IMR-90 (cell line): ENCODE measurements at regions of chr6 and their contacts with region 1.

Region 1: GRCh38 chr6:12011276-12012076 is 636 bp upstream of the HIVEP1 start:
- DNase-seq: peak; percentile 96
- ATAC-seq: peak; percentile 72
- H3K4me3 ChIP-seq: peak overlapping the region; percentile 76
- H3K27ac ChIP-seq: peak overlapping the region; percentile 63; the same call in 1 of the 2 replicates
- H3K4me1 ChIP-seq: no peaks in the 10 kb centered on the region; the same call in 1 of the 2 replicates
- H3K27me3 ChIP-seq: no peaks in the 10 kb centered on the region
- CTCF ChIP-seq: no peak
- POLR2A ChIP-seq: peak; percentile 66
- RAD21 ChIP-seq: no peak

Region 2: GRCh38 chr6:11552442-11552841 is 459.0 kb before region 1 on chr6:
- CTCF ChIA-PET with region 1: no interaction called
- POLR2A ChIA-PET with region 1: no interaction called
- dilution Hi-C with region 1: no loop called
- in situ Hi-C with region 1: no loop called
- intact Hi-C with region 1: no loop called
- DNase-seq: no peak
- ATAC-seq: no peak
- H3K4me3 ChIP-seq: no peak overlapping the region
- H3K27ac ChIP-seq: no peak overlapping the region
- H3K4me1 ChIP-seq: no peaks in the 10 kb centered on the region
- H3K27me3 ChIP-seq: peaks cover 9% of the 10 kb centered on the region
- CTCF ChIP-seq: no peak
- POLR2A ChIP-seq: no peak
- RAD21 ChIP-seq: no peak

Region 3: GRCh38 chr6:11618533-11618932 is 392.9 kb before region 1 on chr6:
- CTCF ChIA-PET with region 1: interaction called, 3 read pairs
- POLR2A ChIA-PET with region 1: no interaction called
- dilution Hi-C with region 1: no loop called
- in situ Hi-C with region 1: no loop called
- intact Hi-C with region 1: loop called (anchors 5 kb)
- DNase-seq: peak; percentile 49
- ATAC-seq: no peak
- H3K4me3 ChIP-seq: no peak overlapping the region
- H3K27ac ChIP-seq: no peak overlapping the region
- H3K4me1 ChIP-seq: peaks cover 14% of the 10 kb centered on the region
- H3K27me3 ChIP-seq: no peaks in the 10 kb centered on the region
- CTCF ChIP-seq: peak; percentile 37
- POLR2A ChIP-seq: no peak
- RAD21 ChIP-seq: peak; percentile 48

Region 4: GRCh38 chr6:11770546-11771466 is 240.7 kb before region 1 on chr6:
- CTCF ChIA-PET with region 1: no interaction called
- POLR2A ChIA-PET with region 1: no interaction called
- dilution Hi-C with region 1: no loop called
- in situ Hi-C with region 1: no loop called
- intact Hi-C with region 1: loop called (anchors 1 kb)
- DNase-seq: peak; percentile 100
- ATAC-seq: peak; percentile 81
- H3K4me3 ChIP-seq: no peak overlapping the region
- H3K27ac ChIP-seq: peak overlapping the region; percentile 81
- H3K4me1 ChIP-seq: peaks cover 36% of the 10 kb centered on the region
- H3K27me3 ChIP-seq: no peaks in the 10 kb centered on the region
- CTCF ChIP-seq: no peak
- POLR2A ChIP-seq: peak; percentile 74; the same call in 1 of the 2 replicates
- RAD21 ChIP-seq: no peak; the same call in none of the 2 replicates

Region 5: DNA sequence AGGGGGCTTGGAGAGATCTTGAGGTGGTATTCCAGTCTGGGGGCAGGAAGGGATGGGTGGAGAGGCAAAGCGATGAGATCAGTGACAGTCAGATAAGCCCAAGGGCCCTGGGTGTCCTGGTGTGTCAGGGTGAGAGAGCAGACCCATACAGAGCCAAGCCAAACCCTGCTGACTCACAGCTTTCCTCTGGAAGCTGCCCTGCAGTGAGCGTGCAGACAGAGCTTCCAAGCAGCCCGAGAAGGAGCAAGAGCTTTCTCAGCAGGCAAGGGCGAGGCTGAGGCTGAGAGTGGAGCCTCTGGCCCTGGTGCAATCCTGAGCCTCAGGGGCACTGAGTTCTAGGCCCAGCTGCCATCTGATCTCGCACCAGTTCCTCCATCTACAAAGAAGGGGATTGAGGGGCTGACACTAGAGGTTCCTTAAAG is 90.4 kb before region 1 on chr6:
- CTCF ChIA-PET with region 1: no interaction called
- POLR2A ChIA-PET with region 1: no interaction called
- dilution Hi-C with region 1: no loop called
- in situ Hi-C with region 1: no loop called
- intact Hi-C with region 1: loop called (anchors 5 kb)
- DNase-seq: peak; percentile 95
- ATAC-seq: peak; percentile 96
- H3K4me3 ChIP-seq: no peak overlapping the region
- H3K27ac ChIP-seq: peak overlapping the region; percentile 59
- H3K4me1 ChIP-seq: peaks cover 18% of the 10 kb centered on the region
- H3K27me3 ChIP-seq: no peaks in the 10 kb centered on the region
- CTCF ChIP-seq: no peak
- POLR2A ChIP-seq: peak; percentile 76; the same call in 1 of the 2 replicates
- RAD21 ChIP-seq: peak; percentile 46

Region 6: DNA sequence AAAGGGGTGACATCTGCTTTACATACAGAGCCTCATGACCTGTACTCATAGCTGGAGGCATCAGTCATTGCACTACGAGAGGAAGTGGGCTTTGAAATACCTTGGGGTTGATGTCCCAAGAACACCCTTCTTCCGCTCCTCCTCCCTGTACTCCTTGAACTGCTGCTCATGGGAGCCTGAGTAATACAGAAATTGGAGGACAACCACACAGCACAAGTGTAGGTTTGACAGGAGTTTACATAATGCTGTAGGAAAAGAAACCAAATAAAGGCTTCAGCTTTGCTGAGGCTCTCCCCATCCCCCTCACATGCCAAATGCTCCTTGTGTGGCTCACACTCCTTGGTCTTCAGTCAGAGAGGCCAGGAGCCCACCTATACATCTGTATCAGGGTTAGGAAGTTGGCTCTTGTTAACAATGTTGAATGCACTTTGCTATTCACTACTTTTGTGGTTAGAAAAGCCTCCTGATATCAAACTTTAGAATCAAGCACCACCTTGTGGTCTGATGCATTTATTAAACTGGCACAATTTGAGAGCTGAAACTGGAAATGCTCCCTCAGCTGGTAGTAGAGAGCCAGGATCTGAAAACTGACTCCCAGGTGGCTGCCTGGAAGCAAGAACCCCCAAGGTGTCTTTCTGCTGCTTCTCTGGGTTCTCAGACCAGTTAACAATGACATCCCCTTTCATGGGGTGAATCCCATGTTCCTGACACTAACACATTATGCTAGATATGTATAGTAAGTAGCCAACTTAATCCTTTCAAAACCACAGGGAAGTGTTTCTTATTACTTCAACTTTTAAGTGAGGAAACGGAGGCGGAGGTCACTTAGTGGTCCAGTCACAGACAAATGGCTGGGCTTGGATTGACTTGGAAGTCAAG is 222.5 kb after region 1 on chr6:
- CTCF ChIA-PET with region 1: interaction called, 3 read pairs
- POLR2A ChIA-PET with region 1: no interaction called
- dilution Hi-C with region 1: no loop called
- in situ Hi-C with region 1: no loop called
- intact Hi-C with region 1: loop called (anchors 1 kb)
- DNase-seq: peak; percentile 84
- ATAC-seq: peak; percentile 90
- H3K4me3 ChIP-seq: no peak overlapping the region
- H3K27ac ChIP-seq: no peak overlapping the region
- H3K4me1 ChIP-seq: peaks cover 4% of the 10 kb centered on the region
- H3K27me3 ChIP-seq: no peaks in the 10 kb centered on the region
- CTCF ChIP-seq: peak; percentile 98
- POLR2A ChIP-seq: no peak
- RAD21 ChIP-seq: peak; percentile 88

Region 7: GRCh38 chr6:12605888-12606345 is 594.4 kb after region 1 on chr6:
- CTCF ChIA-PET with region 1: no interaction called
- POLR2A ChIA-PET with region 1: no interaction called
- dilution Hi-C with region 1: no loop called
- in situ Hi-C with region 1: no loop called
- intact Hi-C with region 1: loop called (anchors 1 kb)
- DNase-seq: peak; percentile 75
- ATAC-seq: peak; percentile 77
- H3K4me3 ChIP-seq: no peak overlapping the region
- H3K27ac ChIP-seq: no peak overlapping the region
- H3K4me1 ChIP-seq: peaks cover 9% of the 10 kb centered on the region
- H3K27me3 ChIP-seq: no peaks in the 10 kb centered on the region
- CTCF ChIP-seq: peak; percentile 81
- POLR2A ChIP-seq: no peak
- RAD21 ChIP-seq: peak; percentile 88

Region 8: GRCh38 chr6:13248053-13248452 is 1236.6 kb after region 1 on chr6:
- CTCF ChIA-PET with region 1: no interaction called
- POLR2A ChIA-PET with region 1: no interaction called
- dilution Hi-C with region 1: no loop called
- in situ Hi-C with region 1: no loop called
- intact Hi-C with region 1: no loop called
- DNase-seq: peak; percentile 61
- ATAC-seq: peak; percentile 85
- H3K4me3 ChIP-seq: no peak overlapping the region
- H3K27ac ChIP-seq: no peak overlapping the region
- H3K4me1 ChIP-seq: peaks cover 5% of the 10 kb centered on the region; the same call in 1 of the 2 replicates
- H3K27me3 ChIP-seq: no peaks in the 10 kb centered on the region
- CTCF ChIP-seq: no peak
- POLR2A ChIP-seq: no peak
- RAD21 ChIP-seq: no peak